Spleen (tissue), 13 donors: ENCODE measurements at regions of chr12 and their contacts with region 1.

Region 1: GRCh38 chr12:43882578-43883178 is 46.8 kb downstream of the TMEM117 start:
- DNase-seq: no peak
- H3K4me3 ChIP-seq: no peak overlapping the region
- H3K27ac ChIP-seq: no peak overlapping the region
- H3K4me1 ChIP-seq: no peaks in the 10 kb centered on the region
- H3K27me3 ChIP-seq: no peaks in the 10 kb centered on the region
- CTCF ChIP-seq: peak; percentile 44 to 82 (median 68)
- POLR2A ChIP-seq: no peak

Region 2: DNA sequence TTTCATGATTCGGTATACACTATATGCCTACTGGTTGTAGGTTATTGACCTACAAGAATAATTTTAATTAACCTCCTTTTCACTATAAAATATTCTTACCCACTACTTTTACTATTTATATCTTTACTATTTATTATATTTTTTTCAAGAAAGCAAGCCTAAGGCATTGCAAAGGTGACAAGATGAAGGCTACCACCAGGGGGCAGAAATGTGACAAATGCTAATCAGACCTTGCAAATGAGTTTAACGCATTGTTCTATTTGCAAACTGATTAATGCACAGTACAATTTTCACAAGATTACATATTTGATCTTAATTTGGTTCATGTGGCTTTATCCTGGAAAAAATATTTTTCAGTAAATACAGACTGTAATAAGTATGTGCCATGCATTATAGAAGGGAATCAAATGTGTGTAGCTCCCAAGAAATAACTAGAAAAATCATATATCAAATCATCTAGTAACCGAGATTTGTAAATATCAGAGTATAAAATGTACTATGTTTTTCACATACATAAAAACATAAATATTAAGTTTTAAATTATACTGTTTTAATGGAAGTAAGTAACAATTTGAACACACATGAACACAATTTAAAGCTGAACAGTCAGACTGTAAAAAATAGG is 437.6 kb before region 1 on chr12:
- intact Hi-C with region 1: loop called (anchors 5 kb)
- DNase-seq: no peak
- H3K4me3 ChIP-seq: no peak overlapping the region
- H3K27ac ChIP-seq: no peak overlapping the region
- H3K4me1 ChIP-seq: no peaks in the 10 kb centered on the region
- H3K27me3 ChIP-seq: peaks cover 0 to 8% (median 0%) of the 10 kb centered on the region in 7 donors
- CTCF ChIP-seq: peak in 8 of 11 experiments; percentile 26 to 73 (median 62)
- POLR2A ChIP-seq: no peak

Region 3: DNA sequence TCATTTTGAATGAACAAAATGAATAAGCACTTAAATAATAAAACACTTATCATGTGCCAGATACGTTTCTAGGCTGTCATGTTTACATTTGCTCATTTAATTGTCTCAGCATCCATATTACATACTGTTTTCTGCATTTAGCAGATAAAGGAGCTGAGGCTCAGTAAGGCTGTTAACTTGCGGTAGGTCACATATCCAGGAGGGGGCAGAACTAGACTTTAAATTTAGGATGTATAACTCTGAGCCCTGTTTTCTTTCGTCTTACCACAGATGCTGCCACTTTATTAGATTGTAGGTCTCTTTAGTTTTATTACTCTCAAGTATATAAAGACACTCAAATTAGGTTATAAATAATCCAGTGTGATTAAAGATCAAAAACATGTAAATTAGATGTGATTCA is 106.2 kb before region 1 on chr12:
- intact Hi-C with region 1: loop called (anchors 10 kb)
- DNase-seq: no peak
- H3K4me3 ChIP-seq: no peak overlapping the region
- H3K27ac ChIP-seq: no peak overlapping the region
- H3K4me1 ChIP-seq: no peaks in the 10 kb centered on the region
- H3K27me3 ChIP-seq: no peaks in the 10 kb centered on the region
- CTCF ChIP-seq: peak in 6 of 11 experiments; percentile 16 to 48 (median 36)
- POLR2A ChIP-seq: no peak

Region 4: DNA sequence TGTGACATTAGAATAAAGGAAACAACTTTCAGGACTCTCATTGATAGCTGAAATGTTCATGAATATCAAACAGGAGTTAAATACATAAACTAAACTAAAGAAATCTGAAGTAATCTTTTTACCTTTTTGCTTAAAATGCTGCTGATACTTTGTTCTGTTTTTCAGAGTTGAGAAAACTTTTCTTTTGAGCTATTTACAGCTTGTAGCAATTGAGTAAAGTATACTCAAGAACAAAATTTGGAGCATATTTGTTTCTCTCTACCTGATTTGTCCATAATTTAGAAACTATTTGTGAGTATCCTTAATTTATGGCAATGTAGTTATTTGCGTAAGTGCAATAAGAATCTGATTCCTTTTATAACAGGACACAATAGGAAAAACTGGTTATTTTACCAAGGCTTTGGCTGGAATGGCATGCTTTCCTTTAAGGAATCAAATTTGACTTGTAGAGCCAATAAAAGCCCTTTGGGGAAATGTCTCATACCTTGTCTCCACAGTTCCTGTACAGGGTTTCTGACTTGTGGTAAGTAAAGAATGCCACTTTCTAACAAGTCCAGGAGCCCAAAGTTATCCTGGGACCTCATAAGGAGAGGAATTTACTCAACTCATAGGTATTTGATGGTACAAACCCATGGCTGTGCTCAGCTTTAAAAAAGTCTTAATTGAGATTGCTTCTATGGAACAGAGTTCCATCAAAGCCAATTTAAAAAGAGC is 149.0 kb after region 1 on chr12:
- intact Hi-C with region 1: no loop called
- DNase-seq: no peak
- H3K4me3 ChIP-seq: no peak overlapping the region
- H3K27ac ChIP-seq: no peak overlapping the region
- H3K4me1 ChIP-seq: no peaks in the 10 kb centered on the region
- H3K27me3 ChIP-seq: no peaks in the 10 kb centered on the region
- CTCF ChIP-seq: no peak
- POLR2A ChIP-seq: no peak

Region 5: DNA sequence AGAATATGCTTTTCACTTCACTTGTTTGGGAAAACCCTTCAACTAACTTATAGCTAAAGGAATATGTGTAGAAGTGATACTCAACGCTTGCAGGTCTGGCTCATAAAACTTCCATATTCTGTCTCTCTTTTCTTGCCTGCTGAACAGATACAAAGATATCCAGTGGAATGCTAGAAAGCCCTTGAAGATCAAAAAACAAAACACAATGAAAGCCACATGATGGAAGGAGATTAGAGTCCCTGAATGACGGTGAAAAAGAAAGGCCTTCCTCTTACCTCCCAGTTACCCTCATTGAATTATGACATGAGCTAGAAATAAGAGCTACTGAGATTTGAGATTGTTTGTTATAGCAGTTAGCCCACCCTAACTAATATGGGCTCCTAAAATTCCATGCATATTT is 1021.6 kb after region 1 on chr12:
- intact Hi-C with region 1: no loop called
- DNase-seq: no peak
- H3K4me3 ChIP-seq: no peak overlapping the region
- H3K27ac ChIP-seq: no peak overlapping the region
- H3K4me1 ChIP-seq: no peaks in the 10 kb centered on the region
- H3K27me3 ChIP-seq: peaks cover 0 to 3% (median 0%) of the 10 kb centered on the region in 7 donors
- CTCF ChIP-seq: no peak
- POLR2A ChIP-seq: no peak